ENCODE measurements at regions of chr11 and their contacts with region 1.

Region 1: GRCh38 chr11:118689851-118690552 is 10.6 kb upstream of the TREH start:
- DNase-seq: peak; percentile 92 to 96
- H3K4me3 ChIP-seq: peak overlapping the region; percentile 25
- H3K4me3 Mint-ChIP-seq: peak overlapping the region; percentile 74
- H3K27ac Mint-ChIP-seq: peak overlapping the region; percentile 80
- H3K4me1 ChIP-seq: peaks cover 14% of the 10 kb centered on the region
- H3K4me1 Mint-ChIP-seq: peaks cover 23% of the 10 kb centered on the region
- H3K27me3 ChIP-seq: no peaks in the 10 kb centered on the region
- H3K27me3 Mint-ChIP-seq: no peaks in the 10 kb centered on the region
- CTCF ChIP-seq: peak; percentile 88 to 100

Region 2: DNA sequence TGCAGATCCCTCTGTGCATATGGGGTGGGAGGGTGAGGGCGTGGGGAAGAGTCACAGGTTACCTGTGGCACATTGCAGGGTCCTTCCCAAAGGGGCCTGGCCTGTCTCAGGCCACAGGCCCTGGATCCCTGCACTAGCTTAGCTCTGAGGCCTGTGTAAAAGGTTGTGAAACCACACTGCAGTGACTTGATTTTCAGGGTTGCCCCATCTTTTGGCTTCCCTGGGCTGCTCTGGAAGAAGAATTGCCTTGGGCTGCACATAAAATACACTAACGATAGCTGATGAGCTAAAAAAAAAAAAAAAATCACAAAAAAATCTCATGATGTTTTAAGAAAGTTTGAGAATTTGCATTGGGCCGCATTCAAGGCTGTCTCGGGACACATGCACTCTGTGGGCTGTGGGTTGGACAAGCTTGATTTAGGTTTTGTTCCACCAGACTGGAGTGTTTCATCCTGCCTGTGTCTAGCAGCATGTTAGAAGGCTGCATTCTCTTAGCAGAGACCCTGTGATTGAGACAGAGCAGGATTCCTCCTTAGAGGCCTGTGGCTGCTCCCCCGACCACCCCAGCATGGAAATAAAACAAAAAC is 25.3 kb after region 1 on chr11:
- CTCF ChIA-PET with region 1: interaction called, 19 read pairs
- POLR2A ChIA-PET with region 1: no interaction called
- intact Hi-C with region 1: loop called (anchors 2 kb)
- DNase-seq: peak; percentile 57 to 74
- H3K4me3 ChIP-seq: no peak overlapping the region
- H3K4me3 Mint-ChIP-seq: peak overlapping the region; percentile 13
- H3K27ac Mint-ChIP-seq: peak overlapping the region; percentile 76
- H3K4me1 ChIP-seq: peaks cover 49% of the 10 kb centered on the region
- H3K4me1 Mint-ChIP-seq: peaks cover 50% of the 10 kb centered on the region
- H3K27me3 ChIP-seq: no peaks in the 10 kb centered on the region
- H3K27me3 Mint-ChIP-seq: no peaks in the 10 kb centered on the region
- CTCF ChIP-seq: no peak

Region 3: DNA sequence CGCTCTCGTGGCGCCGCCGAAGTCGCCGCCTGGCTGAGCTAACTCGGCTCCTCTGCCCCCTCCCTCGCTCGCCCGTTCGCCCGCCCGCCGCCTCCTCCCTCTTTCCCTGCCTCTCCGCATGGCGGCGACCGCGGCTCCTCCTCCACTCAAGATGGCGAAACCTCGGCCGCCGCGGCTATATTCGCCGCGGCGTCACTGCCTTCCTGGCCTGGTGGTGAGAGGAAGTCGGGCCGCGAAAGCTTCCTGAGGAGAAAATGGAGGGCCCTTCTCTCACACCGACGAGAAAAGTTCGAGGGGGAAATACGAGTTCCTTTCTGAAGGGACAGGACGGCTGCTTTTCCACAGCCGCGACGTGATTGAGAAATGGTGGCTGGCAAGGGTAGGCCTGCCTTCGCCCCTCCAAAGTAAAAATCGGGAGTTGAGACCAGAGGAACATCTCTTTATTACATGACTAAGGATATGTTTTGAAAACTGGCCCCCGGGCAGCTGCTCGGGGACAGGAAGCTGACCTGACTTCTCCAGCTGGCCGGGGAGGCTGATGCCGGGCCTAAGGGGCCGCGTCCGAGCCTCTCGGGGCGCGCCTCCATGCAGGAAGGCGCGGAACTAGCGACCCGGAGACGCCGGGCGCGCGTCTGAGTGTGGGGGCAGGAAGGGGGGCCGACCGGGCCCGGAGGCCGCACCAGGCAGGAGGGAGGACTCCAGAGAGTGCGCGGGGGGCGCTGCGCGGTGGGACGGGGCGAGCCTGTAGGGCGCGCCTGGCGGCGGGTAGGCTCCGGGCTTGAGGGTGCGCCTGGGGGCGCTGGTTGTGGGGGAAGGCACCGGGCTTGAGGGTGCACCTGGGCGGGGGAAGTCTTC is 101.3 kb after region 1 on chr11 and contains the start of gene DDX6:
- CTCF ChIA-PET with region 1: interaction called, 10 read pairs
- POLR2A ChIA-PET with region 1: interaction called, 5 read pairs
- intact Hi-C with region 1: loop called (anchors 1 kb)
- DNase-seq: peak; percentile 96 to 98
- H3K4me3 ChIP-seq: peak within 1 kb of the TSS; percentile 63
- H3K4me3 Mint-ChIP-seq: peak within 1 kb of the TSS; percentile 93
- H3K27ac Mint-ChIP-seq: peak within 1 kb of the TSS; percentile 90
- H3K4me1 ChIP-seq: peaks cover 23% of the 10 kb centered on the region
- H3K4me1 Mint-ChIP-seq: peaks cover 23% of the 10 kb centered on the region
- H3K27me3 ChIP-seq: no peaks in the 10 kb centered on the region
- H3K27me3 Mint-ChIP-seq: no peaks in the 10 kb centered on the region
- CTCF ChIP-seq: peak in 1 of 2 experiments; percentile 76
- total RNA-seq, gene DDX6: 131 and 135 TPM in 2 replicates

Region 4: DNA sequence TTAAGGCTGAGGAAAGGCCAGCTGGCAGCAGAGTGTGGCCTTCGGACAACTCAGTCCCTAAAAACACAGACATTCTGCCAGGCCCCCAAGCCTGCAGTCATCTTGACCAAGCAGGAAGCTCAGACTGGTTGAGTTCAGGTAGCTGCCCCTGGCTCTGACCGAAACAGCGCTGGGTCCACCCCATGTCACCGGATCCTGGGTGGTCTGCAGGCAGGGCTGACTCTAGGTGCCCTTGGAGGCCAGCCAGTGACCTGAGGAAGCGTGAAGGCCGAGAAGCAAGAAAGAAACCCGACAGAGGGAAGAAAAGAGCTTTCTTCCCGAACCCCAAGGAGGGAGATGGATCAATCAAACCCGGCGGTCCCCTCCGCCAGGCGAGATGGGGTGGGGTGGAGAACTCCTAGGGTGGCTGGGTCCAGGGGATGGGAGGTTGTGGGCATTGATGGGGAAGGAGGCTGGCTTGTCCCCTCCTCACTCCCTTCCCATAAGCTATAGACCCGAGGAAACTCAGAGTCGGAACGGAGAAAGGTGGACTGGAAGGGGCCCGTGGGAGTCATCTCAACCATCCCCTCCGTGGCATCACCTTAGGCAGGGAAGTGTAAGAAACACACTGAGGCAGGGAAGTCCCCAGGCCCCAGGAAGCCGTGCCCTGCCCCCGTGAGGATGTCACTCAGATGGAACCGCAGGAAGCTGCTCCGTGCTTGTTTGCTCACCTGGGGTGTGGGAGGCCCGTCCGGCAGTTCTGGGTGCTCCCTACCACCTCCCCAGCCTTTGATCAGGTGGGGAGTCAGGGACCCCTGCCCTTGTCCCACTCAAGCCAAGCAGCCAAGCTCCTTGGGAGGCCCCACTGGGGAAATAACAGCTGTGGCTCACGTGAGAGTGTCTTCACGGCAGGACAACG is 205.4 kb after region 1 on chr11:
- CTCF ChIA-PET with region 1: interaction called, 6 read pairs
- POLR2A ChIA-PET with region 1: interaction called, 3 read pairs
- intact Hi-C with region 1: loop called (anchors 2 kb)
- DNase-seq: peak; percentile 62 to 67
- H3K4me3 ChIP-seq: no peak overlapping the region
- H3K4me3 Mint-ChIP-seq: peak overlapping the region; percentile 3
- H3K27ac Mint-ChIP-seq: peak overlapping the region; percentile 70
- H3K4me1 ChIP-seq: 0 out of 2 replicates have a peak, but pooled peaks cover 3% of the 10 kb centered on the region
- H3K4me1 Mint-ChIP-seq: peaks cover 17% of the 10 kb centered on the region
- H3K27me3 ChIP-seq: no peaks in the 10 kb centered on the region
- H3K27me3 Mint-ChIP-seq: no peaks in the 10 kb centered on the region
- CTCF ChIP-seq: no peak

Region 5: DNA sequence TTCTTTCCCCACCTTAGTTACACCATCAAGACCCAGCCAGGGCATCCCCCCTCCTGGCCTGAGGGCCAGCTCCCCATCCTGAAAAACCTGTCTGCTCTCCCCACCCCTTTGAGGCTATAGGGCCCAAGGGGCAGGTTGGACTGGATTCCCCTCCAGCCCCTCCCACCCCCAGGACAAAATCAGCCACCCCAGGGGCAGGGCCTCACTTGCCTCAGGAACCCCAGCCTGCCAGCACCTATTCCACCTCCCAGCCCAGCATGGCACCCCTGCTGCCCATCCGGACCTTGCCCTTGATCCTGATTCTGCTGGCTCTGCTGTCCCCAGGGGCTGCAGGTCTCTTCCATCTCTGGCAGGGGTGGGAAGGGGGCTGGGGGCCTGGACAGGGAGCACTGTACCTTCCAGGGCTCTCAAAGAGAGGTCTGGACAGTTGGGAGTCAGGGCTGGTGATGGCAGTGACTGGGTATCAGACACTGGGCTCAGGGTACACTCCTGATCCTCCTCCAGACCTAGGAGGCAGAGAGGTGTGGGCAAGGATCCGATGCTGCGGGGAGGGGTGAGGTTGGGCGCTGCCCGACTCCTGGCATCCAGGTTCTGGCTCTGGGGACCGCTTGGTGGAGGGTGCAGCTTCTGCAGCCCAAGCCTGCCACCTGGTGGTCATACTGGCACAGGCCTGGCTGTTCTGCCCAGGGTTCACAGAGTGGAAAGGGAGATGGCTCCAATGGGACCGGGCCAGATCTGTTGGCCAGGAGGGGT is 266.3 kb after region 1 on chr11 and contains the start of gene UPK2:
- CTCF ChIA-PET with region 1: interaction called, 14 read pairs
- POLR2A ChIA-PET with region 1: no interaction called
- intact Hi-C with region 1: loop called (anchors 1 kb)
- DNase-seq: peak; percentile 93 to 96
- H3K4me3 ChIP-seq: no peak within 1 kb of the TSS
- H3K4me3 Mint-ChIP-seq: peak within 1 kb of the TSS; percentile 5
- H3K27ac Mint-ChIP-seq: peak within 1 kb of the TSS; percentile 34
- H3K4me1 ChIP-seq: peaks cover 15% of the 10 kb centered on the region
- H3K4me1 Mint-ChIP-seq: peaks cover 15% of the 10 kb centered on the region
- H3K27me3 ChIP-seq: no peaks in the 10 kb centered on the region
- H3K27me3 Mint-ChIP-seq: peaks cover 2% of the 10 kb centered on the region
- CTCF ChIP-seq: peak; percentile 99 to 100
- total RNA-seq, gene UPK2: 1.8 and 3.5 TPM in 2 replicates